ENCODE measurements at regions of chr2 and their contacts with region 1.

Region 1: DNA sequence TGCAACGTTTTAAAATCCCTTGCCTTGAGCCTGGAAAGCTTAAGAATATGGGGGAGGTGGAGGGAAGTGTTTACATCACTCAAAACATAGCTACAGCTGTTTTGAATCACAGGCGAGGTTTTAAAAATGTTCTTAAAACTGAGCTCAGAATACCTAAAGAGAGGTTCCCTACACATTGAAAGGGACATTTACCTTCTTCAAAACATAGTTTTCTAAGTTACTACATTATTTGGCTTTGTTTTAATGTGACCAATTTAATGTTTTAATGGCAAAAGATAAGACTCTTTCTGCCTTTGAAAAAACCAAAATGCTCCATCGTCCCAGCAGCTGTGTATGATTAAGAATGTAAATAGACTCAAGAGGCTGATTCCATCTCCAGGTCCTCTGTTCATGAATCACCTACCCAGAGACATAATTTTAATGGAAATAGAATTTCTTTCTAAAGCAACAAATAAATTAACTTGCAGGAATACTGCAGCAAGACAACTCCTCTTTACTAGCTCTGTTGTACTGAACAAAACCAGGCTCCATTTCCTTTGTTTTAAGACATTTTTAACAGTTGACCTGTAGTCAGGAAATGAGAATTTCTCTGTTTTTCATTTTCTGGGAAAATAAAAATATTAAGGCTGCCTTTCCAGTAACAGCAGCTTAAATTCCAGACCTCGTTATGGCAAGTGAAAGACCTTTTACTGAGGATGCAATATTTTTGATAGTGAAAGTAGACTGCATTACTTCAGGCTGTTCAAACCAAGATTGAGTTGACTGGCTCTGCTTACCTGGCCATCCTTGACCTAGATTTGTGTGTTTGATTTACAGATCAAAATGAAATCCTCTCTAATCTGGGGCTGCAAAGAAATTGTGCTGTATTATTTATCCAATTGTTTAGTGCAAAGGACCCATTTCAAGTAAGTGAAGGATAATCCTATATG is 33.7 kb upstream of the WDR75 start:
- DNase-seq: no peak
- ATAC-seq: peak in 1 of 2 donors; percentile 59
- H3K4me3 ChIP-seq: no peak overlapping the region
- H3K27ac ChIP-seq: peak overlapping the region; percentile 64
- H3K4me1 ChIP-seq: no peaks in the 10 kb centered on the region
- H3K27me3 ChIP-seq: no peaks in the 10 kb centered on the region
- CTCF ChIP-seq: no peak

Region 2: GRCh38 chr2:189096769-189097447 is 310.6 kb before region 1 on chr2:
- intact Hi-C with region 1: loop called (anchors 10 kb)
- DNase-seq: no peak
- ATAC-seq: peak in 1 of 2 donors; percentile 57
- H3K4me3 ChIP-seq: no peak overlapping the region
- H3K27ac ChIP-seq: no peak overlapping the region
- H3K4me1 ChIP-seq: peaks cover 14% of the 10 kb centered on the region
- H3K27me3 ChIP-seq: no peaks in the 10 kb centered on the region
- CTCF ChIP-seq: no peak

Region 3: GRCh38 chr2:189362283-189362682 is 45.3 kb before region 1 on chr2:
- intact Hi-C with region 1: no loop called
- DNase-seq: no peak
- ATAC-seq: no peak
- H3K4me3 ChIP-seq: no peak overlapping the region
- H3K27ac ChIP-seq: no peak overlapping the region
- H3K4me1 ChIP-seq: no peaks in the 10 kb centered on the region
- H3K27me3 ChIP-seq: no peaks in the 10 kb centered on the region
- CTCF ChIP-seq: no peak